Activated T-helper 2 cell treated with anti-CD3 and anti-CD28 coated beads, Interferon-gamma antibody, Interleukin-2, Interleukin-4, amounts not matched to agents 10 μg/mL and 5 μg/mL and 100 μg/mL, durations not matched to agents 14 hours and 24 hours and 36 hours (primary cell): ENCODE measurements at regions of chr12 and their contacts with region 1.

Region 1: GRCh38 chr12:132986001-132986912 is at the start of gene ZNF26:
- DNase-seq: peak; percentile 84
- H3K4me3 Mint-ChIP-seq: peak within 1 kb of the TSS; percentile 89
- H3K27ac Mint-ChIP-seq: peak within 1 kb of the TSS; percentile 90
- H3K4me1 Mint-ChIP-seq: peaks cover 16% of the 10 kb centered on the region
- H3K27me3 Mint-ChIP-seq: no peaks in the 10 kb centered on the region
- total RNA-seq, gene ZNF26: 15.2 and 17.1 TPM in 2 replicates

Region 2: DNA sequence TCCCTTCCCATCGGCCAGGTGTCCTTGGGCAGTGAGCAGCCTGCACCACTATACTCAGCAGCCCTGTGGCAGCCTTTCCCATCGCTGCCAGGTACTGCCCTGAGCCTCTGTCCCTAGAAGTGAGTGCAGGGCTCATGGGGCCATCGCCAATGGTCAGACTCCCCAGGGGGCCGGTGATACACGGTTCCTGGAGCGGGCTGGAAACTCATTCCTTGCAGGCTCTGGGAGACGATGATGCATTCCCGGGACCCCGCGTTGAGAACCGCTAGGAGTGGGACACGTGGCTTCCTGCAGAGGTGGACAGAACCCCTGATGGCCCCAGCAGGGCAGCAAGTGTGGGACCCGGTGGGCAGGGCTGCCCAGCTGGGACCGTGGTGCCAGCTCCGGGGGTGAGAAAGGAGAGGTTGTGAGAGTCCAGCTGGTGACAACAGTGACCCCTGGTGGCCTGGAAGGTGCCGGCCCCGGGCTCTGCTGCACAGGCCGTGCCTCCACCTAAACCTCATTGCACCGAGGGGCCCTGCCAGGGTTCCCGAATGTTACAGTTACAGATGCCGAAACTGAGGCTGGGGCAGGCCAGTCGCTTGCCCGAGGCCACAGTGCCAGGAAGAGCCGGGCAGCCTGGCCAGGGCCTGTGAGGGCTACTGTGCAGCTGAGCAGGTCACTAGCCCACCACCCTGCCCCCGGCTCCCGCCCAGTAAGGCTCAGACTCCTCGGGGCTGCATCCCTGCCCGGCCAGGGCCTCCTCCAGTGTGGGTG is 462.5 kb before region 1 on chr12:
- intact Hi-C with region 1: no loop called
- DNase-seq: peak; percentile 56
- H3K4me3 Mint-ChIP-seq: no peak overlapping the region
- H3K27ac Mint-ChIP-seq: no peak overlapping the region
- H3K4me1 Mint-ChIP-seq: no peaks in the 10 kb centered on the region
- H3K27me3 Mint-ChIP-seq: no peaks in the 10 kb centered on the region

Region 3: GRCh38 chr12:132887513-132888351 is 98.5 kb before region 1 on chr12 and contains the start of gene CHFR:
- intact Hi-C with region 1: loop called (anchors 1 kb)
- DNase-seq: peak; percentile 94
- H3K4me3 Mint-ChIP-seq: peak within 1 kb of the TSS; percentile 97
- H3K27ac Mint-ChIP-seq: peak within 1 kb of the TSS; percentile 99
- H3K4me1 Mint-ChIP-seq: peaks cover 13% of the 10 kb centered on the region
- H3K27me3 Mint-ChIP-seq: peaks cover 3% of the 10 kb centered on the region
- total RNA-seq, gene CHFR: 55.0 and 59.9 TPM in 2 replicates

Region 4: GRCh38 chr12:132908145-132909044 is 77.9 kb before region 1 on chr12:
- intact Hi-C with region 1: loop called (anchors 1 kb)
- DNase-seq: peak; percentile 93
- H3K4me3 Mint-ChIP-seq: peak overlapping the region; percentile 86
- H3K27ac Mint-ChIP-seq: peak overlapping the region; percentile 94
- H3K4me1 Mint-ChIP-seq: peaks cover 4% of the 10 kb centered on the region
- H3K27me3 Mint-ChIP-seq: peaks cover 13% of the 10 kb centered on the region

Region 5: DNA sequence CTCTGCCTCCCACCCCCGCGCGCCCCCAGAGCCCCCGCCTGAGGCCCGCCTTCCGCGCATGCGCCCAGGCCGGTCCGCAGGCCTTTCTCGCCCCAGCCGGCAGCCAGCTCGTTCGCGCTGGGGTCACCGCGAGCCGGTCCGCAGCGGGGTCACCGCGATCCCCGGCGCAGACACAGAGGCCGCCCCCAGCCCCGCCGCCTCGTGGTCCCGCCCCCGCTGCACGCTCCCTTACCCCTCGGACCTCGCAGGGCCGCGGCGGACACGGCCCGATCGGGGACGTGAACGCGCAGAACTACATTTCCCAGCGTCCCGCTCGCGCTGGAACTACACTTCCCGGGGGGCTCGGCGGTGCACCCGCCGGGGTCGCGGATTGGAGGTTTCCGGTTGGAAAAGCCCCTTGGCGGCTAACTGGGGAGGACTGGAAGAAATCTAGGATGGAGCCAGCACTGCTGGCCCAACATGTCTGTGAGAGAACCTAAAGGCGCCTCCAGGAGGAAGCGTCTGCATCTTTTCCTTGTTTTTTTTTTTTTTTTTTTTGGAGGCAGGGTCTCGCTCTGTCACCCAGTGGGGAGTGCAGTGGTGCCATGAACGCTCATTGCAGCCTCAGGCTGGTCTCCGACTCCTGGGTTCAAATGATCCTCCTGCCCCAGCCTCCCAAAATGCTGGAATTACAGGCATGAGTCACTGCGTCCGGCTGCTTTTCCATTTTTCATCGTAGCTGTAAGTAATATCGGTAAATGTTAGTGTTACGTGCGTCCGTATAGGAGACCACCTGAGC is 30.1 kb before region 1 on chr12 and contains the start of gene ZNF605:
- intact Hi-C with region 1: loop called (anchors 1 kb)
- DNase-seq: peak; percentile 82
- H3K4me3 Mint-ChIP-seq: peak within 1 kb of the TSS; percentile 96
- H3K27ac Mint-ChIP-seq: peak within 1 kb of the TSS; percentile 96
- H3K4me1 Mint-ChIP-seq: peaks cover 12% of the 10 kb centered on the region
- H3K27me3 Mint-ChIP-seq: no peaks in the 10 kb centered on the region
- total RNA-seq, gene ZNF605: 7.3 and 8.2 TPM in 2 replicates

Region 6: DNA sequence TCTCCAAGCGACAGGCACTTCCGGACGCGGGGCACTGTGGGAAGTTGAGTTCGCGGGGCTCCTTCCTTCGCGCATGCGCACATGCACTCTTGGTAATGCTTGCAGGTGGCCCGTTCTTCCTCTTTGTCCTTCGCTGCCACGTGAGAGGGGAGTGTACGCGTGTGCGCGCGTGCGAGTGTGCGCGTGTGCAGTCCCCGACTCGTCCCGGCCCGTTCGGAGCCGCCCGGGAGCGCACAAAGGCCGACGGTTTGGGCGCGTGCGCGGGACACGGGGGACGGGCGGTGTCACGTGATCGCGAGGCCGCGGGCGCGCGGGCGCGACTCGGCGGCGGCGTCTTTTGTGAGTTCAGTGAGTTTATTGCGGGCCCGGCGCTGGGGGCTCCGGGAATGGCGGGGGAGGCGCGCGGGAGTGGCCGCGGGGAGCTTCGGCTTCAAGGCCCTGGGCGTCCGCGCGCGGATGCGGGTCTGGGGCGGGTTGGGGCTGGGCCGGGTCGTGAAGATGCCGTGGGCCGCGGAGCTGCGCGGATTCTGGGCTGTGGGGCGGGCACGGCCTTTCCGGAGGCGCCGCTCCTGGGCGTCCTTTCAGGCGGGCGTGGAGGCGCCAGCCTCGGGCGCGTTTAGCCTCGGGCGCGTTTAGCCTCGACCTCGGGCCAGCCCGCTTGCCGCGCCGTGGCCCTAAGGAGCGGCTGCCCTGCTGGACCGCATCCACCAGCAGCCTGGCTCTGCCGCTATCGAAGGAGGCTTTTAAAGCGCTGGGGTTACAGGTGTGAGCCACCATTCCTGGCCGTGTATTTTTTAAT is 51.1 kb after region 1 on chr12 and contains the start of gene ZNF84:
- intact Hi-C with region 1: loop called (anchors 1 kb)
- DNase-seq: peak; percentile 97
- H3K4me3 Mint-ChIP-seq: peak within 1 kb of the TSS; percentile 88
- H3K27ac Mint-ChIP-seq: peak within 1 kb of the TSS; percentile 98
- H3K4me1 Mint-ChIP-seq: peaks cover 6% of the 10 kb centered on the region
- H3K27me3 Mint-ChIP-seq: no peaks in the 10 kb centered on the region
- total RNA-seq, gene ZNF84: 20.7 and 21.3 TPM in 2 replicates

Region 7: GRCh38 chr12:133130038-133130807 is 144.0 kb after region 1 on chr12 and contains the starts of genes ZNF10 and ZNF891:
- intact Hi-C with region 1: loop called (anchors 1 kb)
- DNase-seq: peak; percentile 94
- H3K4me3 Mint-ChIP-seq: peak within 1 kb of the TSS; percentile 92
- H3K27ac Mint-ChIP-seq: peak within 1 kb of the TSS; percentile 99
- H3K4me1 Mint-ChIP-seq: peaks cover 11% of the 10 kb centered on the region
- H3K27me3 Mint-ChIP-seq: no peaks in the 10 kb centered on the region
- total RNA-seq, gene ZNF10: 4.9 and 6.3 TPM in 2 replicates
- total RNA-seq, gene ZNF891: 2.0 and 2.3 TPM in 2 replicates

Region 8: DNA sequence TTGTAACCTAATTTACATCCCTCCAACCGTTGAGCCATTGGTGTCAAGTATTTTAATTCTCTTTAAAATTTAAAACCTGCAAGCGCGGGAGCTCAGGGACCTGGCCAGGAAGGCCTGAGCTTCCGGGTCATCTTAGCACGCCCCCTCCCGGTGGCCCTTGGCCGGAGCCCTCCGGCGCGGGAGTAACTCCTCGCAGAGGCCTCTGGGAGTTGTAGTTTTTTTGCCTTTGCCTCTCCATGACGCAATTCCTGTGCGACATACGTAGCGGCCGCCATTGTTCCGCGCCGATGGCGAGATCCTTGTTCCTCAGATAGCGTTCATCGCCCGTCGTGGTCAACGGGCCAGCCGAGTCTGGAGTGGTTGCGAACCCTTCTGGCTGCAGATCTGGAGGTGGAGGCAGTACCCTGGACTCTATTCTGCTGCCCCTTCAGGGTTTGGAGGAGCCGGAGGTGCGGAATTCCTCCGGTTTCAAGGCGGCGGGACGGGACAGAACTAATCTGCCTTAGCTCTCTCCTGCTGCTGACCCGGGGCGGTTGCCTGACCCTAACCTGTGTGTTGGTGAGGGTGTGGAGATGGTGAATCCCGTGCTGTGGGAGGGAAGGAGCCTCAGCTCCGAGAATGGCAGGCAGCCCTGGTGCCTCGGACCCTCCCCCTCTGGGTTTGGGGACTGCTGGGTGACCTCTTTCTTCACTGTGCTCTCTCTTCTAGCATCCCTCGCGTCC is 195.1 kb after region 1 on chr12 and contains the start of gene ZNF268:
- intact Hi-C with region 1: loop called (anchors 1 kb)
- DNase-seq: peak; percentile 88
- H3K4me3 Mint-ChIP-seq: peak within 1 kb of the TSS; percentile 99
- H3K27ac Mint-ChIP-seq: peak within 1 kb of the TSS; percentile 95
- H3K4me1 Mint-ChIP-seq: peaks cover 1% of the 10 kb centered on the region
- H3K27me3 Mint-ChIP-seq: no peaks in the 10 kb centered on the region
- total RNA-seq, gene ZNF268: 12.7 and 17.2 TPM in 2 replicates